ENCODE measurements at regions of chr3 and their contacts with region 1.

Region 1: DNA sequence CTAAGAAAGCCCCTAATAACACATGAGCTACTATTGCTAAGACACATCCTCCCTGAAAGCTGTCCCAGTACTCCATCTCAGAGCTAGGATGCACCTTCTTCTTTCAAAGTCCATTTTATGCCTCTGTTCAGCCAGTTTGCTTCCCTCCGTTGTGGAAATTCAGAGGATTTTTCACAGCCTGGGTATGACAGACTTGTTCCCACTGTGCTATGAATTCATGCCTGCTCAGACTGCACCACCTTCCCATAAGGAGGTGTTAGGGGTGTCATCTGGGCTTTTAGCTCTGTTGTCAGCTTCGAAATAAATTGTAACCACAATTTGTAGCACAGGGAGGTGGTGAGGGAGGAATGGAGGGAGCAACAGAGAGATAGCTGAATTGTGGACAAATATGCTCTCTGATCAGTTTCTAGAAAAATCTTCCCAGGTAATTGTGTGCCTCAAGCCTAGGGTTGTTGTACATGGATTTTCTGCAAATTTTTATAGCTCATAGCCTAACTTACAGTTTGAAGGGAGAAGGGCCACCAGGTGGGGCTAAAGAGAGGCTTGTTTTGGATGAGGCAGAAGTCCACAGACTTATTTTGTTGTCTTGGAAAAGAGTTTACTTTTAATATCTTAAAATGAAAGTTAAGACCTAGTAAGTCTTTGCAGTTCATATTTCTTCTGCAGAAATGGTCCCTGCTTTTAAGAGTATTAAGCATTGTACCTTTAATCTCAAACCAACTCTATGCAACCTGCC is 462.0 kb downstream of the PDCD6IP start:
- DNase-seq: peak in 1 of 2 donors; percentile 72
- H3K4me3 ChIP-seq: no peak overlapping the region
- H3K27ac ChIP-seq: peak overlapping the region; percentile 21 to 30
- H3K4me1 ChIP-seq: peaks cover 3 to 44% of the 10 kb centered on the region in 2 donors
- H3K27me3 ChIP-seq: no peaks in the 10 kb centered on the region
- CTCF ChIP-seq: peak in 2 of 3 experiments; percentile 57 to 66

Region 2: GRCh38 chr3:34200576-34200975 is 59.9 kb before region 1 on chr3:
- intact Hi-C with region 1: loop called (anchors 2 kb)
- DNase-seq: no peak
- H3K4me3 ChIP-seq: no peak overlapping the region
- H3K27ac ChIP-seq: no peak overlapping the region
- H3K4me1 ChIP-seq: no peaks in the 10 kb centered on the region
- H3K27me3 ChIP-seq: no peaks in the 10 kb centered on the region
- CTCF ChIP-seq: no peak

Region 3: DNA sequence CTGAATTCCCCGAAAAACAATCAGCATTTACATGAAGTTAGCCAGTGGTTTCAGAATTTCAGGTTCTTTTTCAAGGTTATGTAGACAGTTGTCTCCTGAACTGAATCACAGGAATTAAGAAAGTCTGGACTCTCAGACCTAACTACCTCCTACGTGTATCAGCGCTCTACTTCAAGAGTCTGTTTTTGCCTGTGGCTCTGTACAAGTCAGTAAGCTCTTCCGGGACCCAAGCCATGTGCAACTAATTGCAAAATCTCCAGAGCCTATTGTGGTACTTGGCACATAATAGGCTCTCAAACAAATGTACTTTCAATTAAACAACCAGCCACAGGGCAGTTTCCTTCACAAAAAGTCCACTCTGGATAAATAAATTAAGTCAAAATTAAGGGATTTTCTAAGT is 47.8 kb before region 1 on chr3:
- intact Hi-C with region 1: loop called (anchors 5 kb)
- DNase-seq: peak in 1 of 2 donors; percentile 88
- H3K4me3 ChIP-seq: no peak overlapping the region
- H3K27ac ChIP-seq: peak overlapping the region; percentile 68 to 82
- H3K4me1 ChIP-seq: peaks cover 3 to 27% of the 10 kb centered on the region in 2 donors
- H3K27me3 ChIP-seq: no peaks in the 10 kb centered on the region
- CTCF ChIP-seq: no peak

Region 4: DNA sequence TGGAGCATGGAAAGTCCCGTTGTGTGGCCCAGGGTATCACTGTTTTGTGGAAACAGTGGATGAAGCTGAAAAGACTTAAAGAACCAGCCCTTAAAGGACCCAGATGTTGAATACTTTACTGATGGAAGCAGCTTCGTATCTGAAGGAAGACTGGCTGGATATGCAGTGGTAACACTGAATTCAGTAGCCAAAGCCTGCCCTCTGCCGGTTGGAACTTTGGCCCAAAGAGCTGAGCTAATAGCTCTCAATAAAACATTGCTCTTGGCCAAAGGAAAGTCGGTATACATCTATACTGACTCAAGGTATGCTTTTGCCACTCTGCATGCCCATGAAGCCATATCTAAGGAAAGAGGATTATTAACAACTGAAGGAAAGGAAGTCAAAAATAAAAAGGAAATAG is 423.4 kb after region 1 on chr3:
- intact Hi-C with region 1: loop called (anchors 5 kb)
- DNase-seq: peak in 1 of 2 donors; percentile 69
- H3K4me3 ChIP-seq: no peak overlapping the region
- H3K27ac ChIP-seq: no peak overlapping the region
- H3K4me1 ChIP-seq: no peaks in the 10 kb centered on the region
- H3K27me3 ChIP-seq: no peaks in the 10 kb centered on the region
- CTCF ChIP-seq: peak; percentile 34 to 65 (median 47)

Region 5: GRCh38 chr3:34793057-34793456 is 532.6 kb after region 1 on chr3:
- intact Hi-C with region 1: loop called (anchors 10 kb)
- DNase-seq: no peak
- H3K4me3 ChIP-seq: no peak overlapping the region
- H3K27ac ChIP-seq: no peak overlapping the region
- H3K4me1 ChIP-seq: no peaks in the 10 kb centered on the region
- H3K27me3 ChIP-seq: no peaks in the 10 kb centered on the region
- CTCF ChIP-seq: no peak